Activated CD4-positive, alpha-beta T cell treated with anti-CD3 and anti-CD28 coated beads, Interleukin-2, amount 10 ng/mL, durations not matched to agents 7 days and 5 days (primary cell): ENCODE measurements at regions of chr1 and their contacts with region 1.

Region 1: DNA sequence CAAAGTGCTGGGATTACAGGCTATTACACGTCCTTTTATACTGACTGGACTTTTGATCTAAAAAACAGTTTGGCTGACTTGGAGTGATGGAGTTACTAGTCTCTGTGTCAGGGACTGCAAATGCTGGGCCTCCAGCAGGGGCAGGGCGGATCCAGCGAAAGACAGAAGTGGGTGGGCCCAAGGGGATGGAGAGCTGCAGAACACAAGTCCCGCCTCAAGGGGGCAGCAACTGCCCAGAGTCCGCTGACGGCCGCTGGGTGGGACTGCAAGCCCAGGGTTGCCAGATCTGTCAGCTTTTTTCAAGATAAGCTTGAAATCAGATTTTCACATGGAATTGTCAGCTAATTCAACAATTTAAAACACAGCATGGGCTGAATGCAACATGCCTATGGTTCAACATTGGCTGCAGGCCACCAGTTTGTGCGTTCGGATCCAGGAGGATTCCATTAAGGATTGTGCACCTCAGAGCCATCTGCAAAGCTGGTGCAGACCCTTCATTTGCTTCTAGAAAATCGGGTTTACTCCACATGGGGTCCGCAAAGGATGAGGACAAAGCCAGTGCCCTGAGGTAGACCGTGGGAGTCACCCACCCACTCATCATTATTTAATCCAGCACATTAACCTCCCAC is 10.7 kb downstream of the STMN1 start:
- DNase-seq: peak; percentile 92
- H3K4me3 Mint-ChIP-seq: no peak overlapping the region
- H3K27ac Mint-ChIP-seq: peak overlapping the region; percentile 76
- H3K4me1 Mint-ChIP-seq: peaks cover 26% of the 10 kb centered on the region
- H3K27me3 Mint-ChIP-seq: no peaks in the 10 kb centered on the region

Region 2: DNA sequence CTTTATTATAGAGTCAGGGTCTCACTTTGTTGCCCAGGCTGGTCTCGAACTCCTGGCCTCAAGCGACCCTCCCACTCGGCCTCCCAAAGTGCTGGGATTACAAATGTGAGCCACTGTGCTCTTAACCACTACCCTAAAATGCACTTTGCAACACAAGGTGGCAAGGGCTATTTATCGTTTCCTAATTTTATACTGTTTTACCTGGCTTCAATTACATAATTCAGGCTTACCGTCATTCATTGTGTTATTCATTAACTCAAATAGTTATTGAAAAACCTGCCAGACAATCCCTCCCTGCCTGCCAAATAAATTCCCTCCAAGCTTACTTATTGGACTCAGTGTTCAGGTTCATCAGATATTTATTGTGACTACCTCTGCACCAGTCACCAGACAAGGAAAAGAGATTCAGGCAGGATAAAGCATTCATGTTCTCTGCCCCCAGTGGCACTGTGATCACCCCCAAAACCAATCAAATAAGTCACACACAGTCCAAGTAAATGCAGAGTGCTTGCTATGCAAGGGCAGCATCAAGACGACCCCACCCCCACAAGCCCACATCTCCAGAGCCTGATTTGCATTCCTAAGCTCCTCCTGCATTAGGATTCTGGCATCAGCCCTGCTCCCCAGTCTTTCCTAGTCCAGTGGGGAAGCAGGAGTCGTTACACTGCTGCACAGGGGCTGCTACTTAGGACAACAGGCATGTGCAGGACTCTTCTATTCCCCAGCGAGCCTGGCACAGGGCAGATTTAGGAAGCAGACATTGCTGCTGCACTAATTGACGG is 28.1 kb before region 1 on chr1:
- CTCF ChIA-PET with region 1: interaction called, 22 read pairs
- POLR2A ChIA-PET with region 1: no interaction called
- DNase-seq: no peak
- H3K4me3 Mint-ChIP-seq: no peak overlapping the region
- H3K27ac Mint-ChIP-seq: no peak overlapping the region
- H3K4me1 Mint-ChIP-seq: no peaks in the 10 kb centered on the region
- H3K27me3 Mint-ChIP-seq: no peaks in the 10 kb centered on the region

Region 3: GRCh38 chr1:25879675-25880074 is 15.8 kb before region 1 on chr1:
- CTCF ChIA-PET with region 1: interaction called, 19 read pairs
- POLR2A ChIA-PET with region 1: no interaction called
- DNase-seq: no peak
- H3K4me3 Mint-ChIP-seq: no peak overlapping the region
- H3K27ac Mint-ChIP-seq: no peak overlapping the region
- H3K4me1 Mint-ChIP-seq: peaks cover 8% of the 10 kb centered on the region
- H3K27me3 Mint-ChIP-seq: peaks cover 20% of the 10 kb centered on the region

Region 4: DNA sequence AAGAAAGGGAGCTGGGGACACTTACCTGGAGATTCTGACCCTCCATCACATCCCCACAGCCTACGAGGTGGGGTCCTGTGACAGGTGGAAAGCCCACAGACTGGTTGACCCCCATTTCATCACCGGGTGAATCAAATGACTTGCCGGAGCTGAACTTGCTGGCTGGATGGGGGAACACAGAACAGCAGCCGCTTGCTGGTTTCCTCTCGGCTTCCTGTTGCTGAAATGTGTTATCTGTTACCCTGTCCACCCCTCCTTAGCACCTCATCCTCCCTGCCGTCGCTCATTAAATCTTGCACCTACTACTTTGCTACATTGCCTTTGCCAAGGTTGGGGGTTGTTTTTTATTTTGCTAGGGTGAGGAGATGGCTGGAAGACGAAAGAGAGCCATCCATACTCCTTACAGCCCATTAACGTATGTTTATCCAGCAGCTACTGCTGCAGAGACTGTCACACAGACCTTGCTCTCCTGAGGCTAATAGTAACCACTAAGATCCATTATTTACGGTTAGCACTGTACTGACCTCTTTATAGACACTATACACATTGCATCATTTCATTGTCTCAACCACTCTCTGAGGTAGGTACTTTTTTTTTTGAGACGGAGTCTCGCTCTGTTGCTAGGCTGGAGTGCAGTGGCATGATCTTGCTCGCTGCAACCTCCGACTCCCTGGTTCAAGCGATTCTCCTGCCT is 95.4 kb after region 1 on chr1:
- CTCF ChIA-PET with region 1: interaction called, 154 read pairs
- POLR2A ChIA-PET with region 1: interaction called, 3 read pairs
- DNase-seq: peak; percentile 62
- H3K4me3 Mint-ChIP-seq: peak overlapping the region; percentile 82
- H3K27ac Mint-ChIP-seq: peak overlapping the region; percentile 84
- H3K4me1 Mint-ChIP-seq: peaks cover 58% of the 10 kb centered on the region
- H3K27me3 Mint-ChIP-seq: no peaks in the 10 kb centered on the region

Region 5: GRCh38 chr1:25997828-25998761 is 102.6 kb after region 1 on chr1 and contains the start of gene PAFAH2:
- CTCF ChIA-PET with region 1: interaction called, 154 read pairs
- POLR2A ChIA-PET with region 1: interaction called, 10 read pairs
- DNase-seq: peak; percentile 98
- H3K4me3 Mint-ChIP-seq: peak within 1 kb of the TSS; percentile 94
- H3K27ac Mint-ChIP-seq: peak within 1 kb of the TSS; percentile 96
- H3K4me1 Mint-ChIP-seq: peaks cover 26% of the 10 kb centered on the region
- H3K27me3 Mint-ChIP-seq: peaks cover 2% of the 10 kb centered on the region
- total RNA-seq, gene PAFAH2: 10.1 to 11.9 TPM

Region 6: GRCh38 chr1:26003262-26003661 is 107.8 kb after region 1 on chr1:
- CTCF ChIA-PET with region 1: interaction called, 154 read pairs
- POLR2A ChIA-PET with region 1: interaction called, 10 read pairs
- DNase-seq: no peak
- H3K4me3 Mint-ChIP-seq: no peak overlapping the region
- H3K27ac Mint-ChIP-seq: no peak overlapping the region
- H3K4me1 Mint-ChIP-seq: peaks cover 9% of the 10 kb centered on the region
- H3K27me3 Mint-ChIP-seq: peaks cover 8% of the 10 kb centered on the region